ENCODE measurements at regions of chr18 and their contacts with region 1.

Region 1: GRCh38 chr18:29154758-29155725 is 978.1 kb upstream of the CDH2 start:
- DNase-seq: peak; percentile 96
- H3K4me3 ChIP-seq: no peak overlapping the region
- H3K27ac ChIP-seq: peak overlapping the region; percentile 92
- H3K4me1 ChIP-seq: peaks cover 43% of the 10 kb centered on the region
- H3K27me3 ChIP-seq: no peaks in the 10 kb centered on the region
- CTCF ChIP-seq: no peak

Region 2: GRCh38 chr18:28995319-28995718 is 159.7 kb before region 1 on chr18:
- CTCF ChIA-PET with region 1: no interaction called
- dilution Hi-C with region 1: no loop called
- in situ Hi-C with region 1: no loop called
- intact Hi-C with region 1: loop called (anchors 10 kb)
- DNase-seq: no peak
- H3K4me3 ChIP-seq: no peak overlapping the region
- H3K27ac ChIP-seq: no peak overlapping the region
- H3K4me1 ChIP-seq: no peaks in the 10 kb centered on the region
- H3K27me3 ChIP-seq: no peaks in the 10 kb centered on the region
- CTCF ChIP-seq: peak; percentile 46 to 62

Region 3: DNA sequence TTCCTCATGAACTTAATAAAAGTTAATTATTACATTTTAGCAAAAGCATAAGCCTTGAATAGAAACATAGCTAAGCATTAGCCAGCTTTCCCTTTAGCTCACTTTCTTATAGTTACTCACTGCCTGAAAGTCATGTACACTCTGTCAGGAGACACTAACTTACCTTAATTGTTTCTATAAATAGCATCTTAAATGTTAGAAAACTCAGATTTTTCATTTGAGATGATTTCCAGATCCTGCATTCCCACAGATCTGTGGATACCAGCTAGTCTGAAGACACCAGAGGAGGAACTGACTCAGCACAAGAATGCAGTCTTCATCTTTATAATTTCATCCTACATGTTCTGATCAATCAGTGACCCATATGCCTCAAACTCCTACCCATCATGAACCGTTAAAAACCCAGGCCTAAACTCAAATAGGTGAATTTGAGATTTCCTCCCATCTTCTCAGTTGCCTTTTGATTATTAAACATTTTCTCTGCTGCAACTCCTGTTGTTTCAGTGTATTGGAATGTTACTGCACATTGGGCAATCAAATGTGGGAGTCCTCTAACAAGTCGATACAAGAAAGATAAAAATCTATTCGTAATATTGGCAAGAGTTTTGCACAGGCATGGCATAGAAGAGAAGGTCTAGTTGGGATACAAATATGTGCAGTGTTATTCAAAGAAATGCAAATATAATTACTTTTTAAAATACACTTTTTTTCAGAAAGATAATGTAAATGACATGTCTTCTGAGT is 120.8 kb before region 1 on chr18:
- CTCF ChIA-PET with region 1: no interaction called
- dilution Hi-C with region 1: no loop called
- in situ Hi-C with region 1: no loop called
- intact Hi-C with region 1: loop called (anchors 10 kb)
- DNase-seq: peak; percentile 84
- H3K4me3 ChIP-seq: no peak overlapping the region
- H3K27ac ChIP-seq: peak overlapping the region; percentile 74
- H3K4me1 ChIP-seq: peaks cover 5% of the 10 kb centered on the region
- H3K27me3 ChIP-seq: no peaks in the 10 kb centered on the region
- CTCF ChIP-seq: no peak

Region 4: DNA sequence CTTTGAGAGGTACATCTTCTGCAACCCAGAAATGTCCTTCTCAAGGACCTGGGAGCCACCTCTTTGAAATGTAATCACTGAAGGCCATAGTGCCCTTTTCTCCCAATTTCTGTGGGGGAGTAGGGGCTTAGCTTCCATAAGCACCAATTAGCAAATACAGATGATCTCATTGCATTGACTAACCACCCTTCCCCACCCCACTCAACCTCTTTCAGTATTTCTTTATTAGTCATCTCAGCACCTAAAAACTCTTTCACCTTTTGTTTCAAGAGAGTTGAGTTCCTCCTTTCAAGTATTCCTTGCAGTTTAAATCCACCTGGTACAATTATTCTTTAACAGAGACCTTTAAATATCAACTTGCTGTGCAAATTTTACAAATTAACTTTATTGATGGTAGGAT is 33.7 kb after region 1 on chr18:
- CTCF ChIA-PET with region 1: no interaction called
- dilution Hi-C with region 1: no loop called
- in situ Hi-C with region 1: no loop called
- intact Hi-C with region 1: loop called (anchors 2 kb)
- DNase-seq: peak; percentile 68
- H3K4me3 ChIP-seq: no peak overlapping the region
- H3K27ac ChIP-seq: peak overlapping the region; percentile 29
- H3K4me1 ChIP-seq: peaks cover 9% of the 10 kb centered on the region
- H3K27me3 ChIP-seq: no peaks in the 10 kb centered on the region
- CTCF ChIP-seq: no peak

Region 5: GRCh38 chr18:29406996-29407395 is 252.0 kb after region 1 on chr18:
- CTCF ChIA-PET with region 1: no interaction called
- dilution Hi-C with region 1: no loop called
- in situ Hi-C with region 1: no loop called
- intact Hi-C with region 1: loop called (anchors 10 kb)
- DNase-seq: no peak
- H3K4me3 ChIP-seq: no peak overlapping the region
- H3K27ac ChIP-seq: no peak overlapping the region
- H3K4me1 ChIP-seq: no peaks in the 10 kb centered on the region
- H3K27me3 ChIP-seq: no peaks in the 10 kb centered on the region
- CTCF ChIP-seq: no peak

Region 6: DNA sequence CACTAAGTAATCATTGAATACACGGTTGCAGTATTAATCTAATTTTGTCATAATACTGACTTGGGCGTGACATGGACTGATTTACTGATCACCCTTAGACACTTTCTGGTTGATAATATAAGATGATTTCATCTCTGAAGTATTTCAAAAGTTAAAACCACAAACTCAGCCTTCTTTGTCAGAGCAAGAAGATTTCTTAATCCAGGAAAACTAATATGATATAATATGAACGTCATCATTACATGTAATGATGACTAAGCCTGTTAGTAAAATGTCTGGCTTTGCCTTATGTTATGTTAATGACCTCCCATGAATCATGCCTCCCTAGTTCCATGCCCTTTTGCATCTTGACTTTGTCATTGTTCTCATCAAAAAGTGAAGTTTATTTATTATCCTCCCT is 346.9 kb after region 1 on chr18:
- CTCF ChIA-PET with region 1: no interaction called
- dilution Hi-C with region 1: no loop called
- in situ Hi-C with region 1: no loop called
- intact Hi-C with region 1: loop called (anchors 1 kb)
- DNase-seq: peak; percentile 87
- H3K4me3 ChIP-seq: no peak overlapping the region
- H3K27ac ChIP-seq: peak overlapping the region; percentile 61
- H3K4me1 ChIP-seq: peaks cover 4% of the 10 kb centered on the region
- H3K27me3 ChIP-seq: no peaks in the 10 kb centered on the region
- CTCF ChIP-seq: no peak